Naive thymus-derived CD4-positive, alpha-beta T cell (primary cell): ENCODE measurements at regions of chr6 and their contacts with region 1.

Region 1: DNA sequence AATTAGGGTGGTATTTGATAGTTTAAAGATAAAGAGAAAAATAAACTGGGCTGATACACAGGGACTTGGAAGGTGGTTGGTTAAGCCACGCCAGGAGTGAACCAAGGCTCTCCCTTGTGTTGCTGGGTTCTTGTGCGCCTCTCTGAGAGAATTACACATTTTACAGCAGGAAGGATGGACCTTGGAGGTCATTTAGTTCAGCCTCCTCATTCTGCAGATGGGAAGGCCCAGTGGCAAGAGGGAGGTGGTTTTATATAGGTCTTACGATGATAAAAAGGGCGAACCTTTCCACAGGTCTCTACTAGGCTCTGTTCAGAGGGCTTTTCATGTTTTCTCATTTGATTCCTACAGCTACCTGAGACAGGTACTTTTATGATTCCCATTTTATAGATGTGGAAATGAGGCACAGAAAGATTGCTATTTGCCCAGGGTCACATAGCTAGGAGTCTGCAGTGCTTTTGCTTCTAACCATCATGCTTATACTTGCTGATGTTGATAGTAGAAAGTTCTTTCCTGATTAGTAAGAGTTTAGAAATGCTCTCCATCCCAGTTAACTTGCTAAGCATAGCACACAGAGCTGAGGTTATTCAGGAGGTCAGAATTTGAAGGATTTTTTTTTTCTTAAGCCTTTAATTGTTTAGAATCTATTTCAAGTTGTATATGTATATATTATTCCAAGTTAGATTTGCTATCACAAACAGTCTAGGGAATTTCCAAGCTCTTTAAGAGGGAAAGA is 12.8 kb downstream of the HIVEP1 start:
- DNase-seq: no peak
- ATAC-seq: no peak
- H3K4me3 ChIP-seq: no peak overlapping the region
- H3K4me3 Mint-ChIP-seq: peak overlapping the region in 5 of 10 donors; percentile 1 to 47 (median 27)
- H3K27ac ChIP-seq: no peak overlapping the region
- H3K27ac Mint-ChIP-seq: peak overlapping the region in 4 of 9 donors; percentile 23 to 74 (median 43)
- H3K4me1 ChIP-seq: peaks cover 0 to 22% of the 10 kb centered on the region in 2 donors
- H3K4me1 Mint-ChIP-seq: peaks cover 26 to 83% (median 71%) of the 10 kb centered on the region in 7 donors
- H3K27me3 ChIP-seq: no peaks in the 10 kb centered on the region
- H3K27me3 Mint-ChIP-seq: no peaks in the 10 kb centered on the region

Region 2: DNA sequence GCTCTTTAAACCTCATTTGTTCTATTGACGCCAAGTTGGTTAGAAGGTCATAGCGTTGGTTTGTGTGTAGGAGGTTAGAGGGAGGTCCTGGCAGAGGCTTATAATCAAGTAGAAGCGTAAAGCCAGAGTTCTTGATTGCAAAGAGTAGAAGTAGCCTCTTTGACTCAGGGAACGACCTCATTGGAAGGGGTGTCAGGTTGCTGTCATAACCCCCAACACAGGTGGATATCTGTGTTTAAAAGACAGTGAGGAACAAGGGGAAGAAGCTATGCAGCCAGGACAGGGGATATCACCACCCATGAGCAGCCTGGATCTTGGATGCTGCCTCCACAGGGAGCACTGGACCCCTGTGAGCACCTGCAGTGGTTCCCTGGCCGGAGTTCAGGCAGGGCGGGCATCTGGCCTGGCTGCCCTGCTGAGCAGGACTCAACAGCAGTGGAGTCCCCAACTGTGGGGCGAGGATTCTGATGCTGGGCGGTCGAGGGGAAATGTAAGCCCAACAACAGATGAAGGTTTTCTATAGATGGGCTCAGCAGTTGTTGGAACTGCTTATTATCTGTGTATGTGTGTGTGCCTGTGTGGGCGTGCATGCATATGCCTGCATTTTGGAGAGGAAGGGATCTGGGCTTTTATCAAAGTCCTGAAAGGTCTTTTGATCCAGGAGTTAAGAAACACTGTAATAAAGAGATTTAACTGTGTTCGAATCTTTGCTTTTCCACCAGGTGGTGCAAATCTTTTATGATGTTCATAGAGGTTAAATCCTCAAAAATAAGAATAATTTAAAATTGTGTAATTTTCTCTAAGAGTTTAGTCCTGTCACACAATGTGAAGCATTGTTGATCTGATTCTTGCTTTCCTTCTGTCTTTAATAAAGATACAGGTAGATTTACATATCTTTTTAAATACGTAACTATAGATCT is 14.9 kb after region 1 on chr6:
- CTCF ChIA-PET with region 1: interaction called, 5 read pairs
- POLR2A ChIA-PET with region 1: interaction called, 4 read pairs
- intact Hi-C with region 1: loop called in 1 of 2 experiments (anchors 2 kb)
- DNase-seq: no peak
- ATAC-seq: no peak
- H3K4me3 ChIP-seq: no peak overlapping the region
- H3K4me3 Mint-ChIP-seq: peak overlapping the region in 3 of 10 donors; percentile 29 to 74 (median 73)
- H3K27ac ChIP-seq: no peak overlapping the region
- H3K27ac Mint-ChIP-seq: peak overlapping the region; percentile 30 to 83 (median 59)
- H3K4me1 ChIP-seq: peaks cover 0 to 22% of the 10 kb centered on the region in 2 donors
- H3K4me1 Mint-ChIP-seq: peaks cover 45 to 80% (median 71%) of the 10 kb centered on the region in 7 donors
- H3K27me3 ChIP-seq: peaks cover 0 to 3% of the 10 kb centered on the region in 2 donors
- H3K27me3 Mint-ChIP-seq: no peaks in the 10 kb centered on the region